ENCODE measurements at regions of chr5 and their contacts with region 1.

Region 1: GRCh38 chr5:151239237-151239861 is 13.6 kb upstream of the GM2A start:
- DNase-seq: peak; percentile 42 to 73 (median 53)
- H3K4me3 ChIP-seq: no peak overlapping the region
- H3K4me3 Mint-ChIP-seq: peak overlapping the region in 6 of 7 donors; percentile 9 to 84 (median 50)
- H3K27ac ChIP-seq: no peak overlapping the region
- H3K27ac Mint-ChIP-seq: peak overlapping the region in 2 of 8 donors; percentile 12 to 25
- H3K4me1 ChIP-seq: peaks cover 17% of the 10 kb centered on the region
- H3K4me1 Mint-ChIP-seq: peaks cover 23 to 45% (median 25%) of the 10 kb centered on the region in 3 donors
- H3K27me3 ChIP-seq: no peaks in the 10 kb centered on the region
- H3K27me3 Mint-ChIP-seq: no peaks in the 10 kb centered on the region

Region 2: GRCh38 chr5:151150471-151151262 is 88.7 kb before region 1 on chr5:
- CTCF ChIA-PET with region 1: interaction called, 14 read pairs
- POLR2A ChIA-PET with region 1: no interaction called
- DNase-seq: peak; percentile 58 to 91 (median 77)
- H3K4me3 ChIP-seq: peak overlapping the region; percentile 35
- H3K4me3 Mint-ChIP-seq: peak overlapping the region; percentile 51 to 85 (median 74)
- H3K27ac ChIP-seq: peak overlapping the region; percentile 64
- H3K27ac Mint-ChIP-seq: peak overlapping the region; percentile 92 to 99 (median 97)
- H3K4me1 ChIP-seq: peaks cover 98% of the 10 kb centered on the region
- H3K4me1 Mint-ChIP-seq: peaks cover 97 to 100% (median 99%) of the 10 kb centered on the region in 3 donors
- H3K27me3 ChIP-seq: no peaks in the 10 kb centered on the region
- H3K27me3 Mint-ChIP-seq: no peaks in the 10 kb centered on the region

Region 3: DNA sequence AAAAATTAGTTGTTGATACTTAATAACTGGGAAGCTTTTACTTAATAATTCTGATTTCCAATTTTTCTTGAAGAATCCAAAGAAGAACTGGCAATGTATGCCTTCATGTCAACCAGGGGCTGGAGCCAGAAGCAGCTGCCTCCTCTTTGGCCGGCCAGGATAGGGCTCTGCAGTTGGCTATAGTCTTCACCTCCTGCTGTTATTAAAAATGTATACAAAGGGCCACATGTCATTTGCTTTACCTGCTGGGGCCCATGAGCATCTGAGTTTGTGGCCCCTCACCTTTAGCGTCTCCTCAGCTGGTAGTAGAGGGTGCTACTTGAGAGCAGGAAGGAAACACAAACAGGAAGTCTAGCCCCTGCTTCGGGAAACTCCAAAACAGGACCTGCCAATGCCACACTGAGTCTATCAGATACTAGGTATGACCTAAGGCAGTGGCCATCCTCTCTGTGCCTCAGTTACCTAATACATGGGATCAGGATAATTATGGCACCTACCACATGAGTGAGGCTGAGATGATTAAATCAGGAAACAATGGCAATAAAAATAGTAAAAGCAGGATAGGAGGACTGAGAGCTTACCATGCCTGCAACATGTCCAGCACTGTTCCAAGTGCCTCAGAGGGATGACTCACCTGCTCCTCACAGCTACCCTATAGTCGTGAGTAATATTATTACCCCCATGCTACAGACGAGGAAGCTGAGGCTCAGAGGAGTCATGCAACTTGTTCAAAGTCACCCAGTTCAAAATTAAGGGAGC is 36.8 kb before region 1 on chr5:
- CTCF ChIA-PET with region 1: interaction called, 13 read pairs
- POLR2A ChIA-PET with region 1: interaction called, 4 read pairs
- DNase-seq: peak in 3 of 5 donors; percentile 32 to 60 (median 38)
- H3K4me3 ChIP-seq: no peak overlapping the region
- H3K4me3 Mint-ChIP-seq: peak overlapping the region in 6 of 7 donors; percentile 23 to 74 (median 59)
- H3K27ac ChIP-seq: no peak overlapping the region
- H3K27ac Mint-ChIP-seq: peak overlapping the region; percentile 86 to 99 (median 90)
- H3K4me1 ChIP-seq: peaks cover 29% of the 10 kb centered on the region
- H3K4me1 Mint-ChIP-seq: peaks cover 36 to 58% (median 41%) of the 10 kb centered on the region in 3 donors
- H3K27me3 ChIP-seq: no peaks in the 10 kb centered on the region
- H3K27me3 Mint-ChIP-seq: no peaks in the 10 kb centered on the region

Region 4: GRCh38 chr5:151213800-151214613 is 25.3 kb before region 1 on chr5:
- CTCF ChIA-PET with region 1: interaction called, 38 read pairs
- POLR2A ChIA-PET with region 1: interaction called, 10 read pairs
- DNase-seq: peak; percentile 75 to 93 (median 83)
- H3K4me3 ChIP-seq: peak overlapping the region; percentile 85
- H3K4me3 Mint-ChIP-seq: peak overlapping the region; percentile 83 to 95 (median 93)
- H3K27ac ChIP-seq: peak overlapping the region; percentile 91
- H3K27ac Mint-ChIP-seq: peak overlapping the region; percentile 91 to 99 (median 98)
- H3K4me1 ChIP-seq: peaks cover 95% of the 10 kb centered on the region
- H3K4me1 Mint-ChIP-seq: peaks cover 82 to 95% (median 90%) of the 10 kb centered on the region in 3 donors
- H3K27me3 ChIP-seq: no peaks in the 10 kb centered on the region
- H3K27me3 Mint-ChIP-seq: peaks cover 0 to 2% of the 10 kb centered on the region in 2 donors

Region 5: DNA sequence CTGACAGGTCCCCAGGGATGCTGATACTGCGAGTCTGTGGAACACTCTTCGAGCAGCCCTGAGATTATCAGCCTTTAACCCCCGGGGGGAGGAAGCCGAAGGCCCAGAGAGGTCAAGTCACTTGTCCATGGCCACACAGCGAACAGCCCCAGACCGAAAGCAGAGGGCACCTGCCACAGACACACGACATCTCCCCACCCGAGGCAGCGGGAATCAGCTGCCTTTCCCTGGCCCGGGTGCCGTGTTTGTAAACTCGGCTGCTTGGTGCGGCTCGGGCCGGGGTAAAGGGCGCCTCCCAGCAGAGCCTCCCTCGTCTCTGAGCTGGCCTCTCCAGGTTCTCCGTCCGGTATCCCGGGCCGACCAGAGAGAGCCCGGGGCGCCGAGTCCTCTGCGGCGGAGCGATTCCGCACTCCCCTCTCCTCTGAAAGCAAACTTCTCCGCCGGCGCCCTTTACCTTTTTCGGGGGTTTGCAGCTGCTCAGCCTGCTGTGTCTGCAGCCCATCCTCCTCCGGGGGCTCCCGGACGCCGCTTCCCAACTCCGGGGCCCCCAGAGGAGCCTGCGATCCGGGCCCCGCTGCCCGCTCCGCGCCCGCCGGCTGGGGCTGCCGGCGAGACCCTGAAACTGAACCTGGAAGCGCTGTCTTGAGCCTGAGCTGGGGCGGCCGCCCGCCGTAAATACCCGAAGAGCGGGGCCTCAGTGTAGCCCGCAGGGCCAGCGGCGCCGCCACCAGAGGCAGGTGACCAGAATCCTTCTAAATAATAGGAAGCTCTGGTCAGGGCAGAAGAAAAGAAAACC is 15.7 kb before region 1 on chr5 and contains the start of gene CCDC69:
- CTCF ChIA-PET with region 1: interaction called, 66 read pairs
- POLR2A ChIA-PET with region 1: interaction called, 14 read pairs
- DNase-seq: peak; percentile 28 to 69 (median 47)
- H3K4me3 ChIP-seq: peak within 1 kb of the TSS; percentile 92
- H3K4me3 Mint-ChIP-seq: peak within 1 kb of the TSS; percentile 80 to 98 (median 89)
- H3K27ac ChIP-seq: peak within 1 kb of the TSS; percentile 86
- H3K27ac Mint-ChIP-seq: peak within 1 kb of the TSS; percentile 91 to 99 (median 96)
- H3K4me1 ChIP-seq: peaks cover 63% of the 10 kb centered on the region
- H3K4me1 Mint-ChIP-seq: peaks cover 55 to 61% (median 59%) of the 10 kb centered on the region in 3 donors
- H3K27me3 ChIP-seq: no peaks in the 10 kb centered on the region
- H3K27me3 Mint-ChIP-seq: no peaks in the 10 kb centered on the region
- total RNA-seq, gene CCDC69: 47.9 to 50.5 TPM

Region 6: GRCh38 chr5:151252762-151253604 is 13.6 kb after region 1 on chr5 and contains the start of gene GM2A:
- CTCF ChIA-PET with region 1: interaction called, 11 read pairs
- POLR2A ChIA-PET with region 1: interaction called, 9 read pairs
- DNase-seq: peak; percentile 97 to 98 (median 97)
- H3K4me3 ChIP-seq: peak within 1 kb of the TSS; percentile 97
- H3K4me3 Mint-ChIP-seq: peak within 1 kb of the TSS; percentile 87 to 97 (median 91)
- H3K27ac ChIP-seq: peak within 1 kb of the TSS; percentile 66
- H3K27ac Mint-ChIP-seq: peak within 1 kb of the TSS; percentile 72 to 94 (median 93)
- H3K4me1 ChIP-seq: peaks cover 30% of the 10 kb centered on the region
- H3K4me1 Mint-ChIP-seq: peaks cover 33 to 57% (median 36%) of the 10 kb centered on the region in 3 donors
- H3K27me3 ChIP-seq: no peaks in the 10 kb centered on the region
- H3K27me3 Mint-ChIP-seq: no peaks in the 10 kb centered on the region
- total RNA-seq, gene GM2A: 12.7 to 14.9 TPM

Measured in CD8-positive, alpha-beta memory T cell (primary cell).